Naive thymus-derived CD4-positive, alpha-beta T cell (primary cell): ENCODE measurements at regions of chr9 and their contacts with region 1.

Region 1: DNA sequence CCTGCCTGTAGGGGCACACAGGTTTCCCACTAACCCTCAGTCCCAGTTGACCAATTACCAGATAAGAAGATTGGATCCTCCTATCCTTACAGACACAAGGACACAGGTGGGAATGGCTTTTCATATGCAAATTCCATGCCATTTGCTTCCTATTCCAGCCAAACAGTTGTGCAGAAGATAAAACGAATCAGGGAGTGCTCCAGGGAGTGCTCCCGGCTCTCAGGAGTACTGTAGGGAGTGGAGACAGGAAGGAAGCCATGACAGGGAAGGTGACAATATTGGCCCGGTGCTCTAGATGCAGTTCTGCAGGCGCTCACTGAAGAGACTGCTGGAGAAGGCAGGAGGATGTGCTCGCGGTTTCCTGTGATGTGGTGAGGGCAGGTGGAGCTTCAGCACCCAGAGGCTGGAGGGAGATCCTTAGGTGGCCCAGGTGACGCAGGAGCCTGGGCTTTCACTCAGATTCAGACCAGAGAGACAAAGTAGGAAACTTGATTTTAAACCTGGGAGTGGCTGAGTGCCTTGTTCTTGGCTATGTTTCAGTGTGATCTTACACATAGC is 260.0 kb downstream of the AUH start:
- DNase-seq: peak; percentile 31 to 91 (median 87)
- ATAC-seq: peak; percentile 90
- H3K4me3 ChIP-seq: no peak overlapping the region
- H3K4me3 Mint-ChIP-seq: peak overlapping the region in 9 of 10 donors; percentile 44 to 82 (median 66)
- H3K27ac ChIP-seq: no peak overlapping the region
- H3K27ac Mint-ChIP-seq: peak overlapping the region in 7 of 9 donors; percentile 43 to 85 (median 78)
- H3K4me1 ChIP-seq: peaks cover 32 to 34% of the 10 kb centered on the region in 2 donors
- H3K4me1 Mint-ChIP-seq: peaks cover 27 to 61% (median 36%) of the 10 kb centered on the region in 7 donors
- H3K27me3 ChIP-seq: no peaks in the 10 kb centered on the region
- H3K27me3 Mint-ChIP-seq: peaks cover 0 to 25% (median 2%) of the 10 kb centered on the region in 5 donors

Region 2: GRCh38 chr9:90420768-90421513 is 680.7 kb before region 1 on chr9:
- CTCF ChIA-PET with region 1: no interaction called
- POLR2A ChIA-PET with region 1: no interaction called
- intact Hi-C with region 1: no loop called
- DNase-seq: no peak
- ATAC-seq: no peak
- H3K4me3 ChIP-seq: no peak overlapping the region
- H3K4me3 Mint-ChIP-seq: no peak overlapping the region
- H3K27ac ChIP-seq: no peak overlapping the region
- H3K27ac Mint-ChIP-seq: no peak overlapping the region
- H3K4me1 ChIP-seq: no peaks in the 10 kb centered on the region
- H3K4me1 Mint-ChIP-seq: peaks cover 0 to 4% (median 0%) of the 10 kb centered on the region in 7 donors
- H3K27me3 ChIP-seq: no peaks in the 10 kb centered on the region
- H3K27me3 Mint-ChIP-seq: peaks cover 4 to 15% (median 6%) of the 10 kb centered on the region in 5 donors

Region 3: GRCh38 chr9:91036826-91037510 is 64.7 kb before region 1 on chr9:
- CTCF ChIA-PET with region 1: no interaction called
- POLR2A ChIA-PET with region 1: no interaction called
- intact Hi-C with region 1: loop called (anchors 1 to 10 kb)
- DNase-seq: peak; percentile 31 to 69 (median 54)
- ATAC-seq: peak; percentile 88
- H3K4me3 ChIP-seq: no peak overlapping the region
- H3K4me3 Mint-ChIP-seq: peak overlapping the region in 9 of 10 donors; percentile 13 to 73 (median 37)
- H3K27ac ChIP-seq: no peak overlapping the region
- H3K27ac Mint-ChIP-seq: peak overlapping the region in 5 of 9 donors; percentile 13 to 38 (median 26)
- H3K4me1 ChIP-seq: peaks cover 8 to 11% of the 10 kb centered on the region in 2 donors
- H3K4me1 Mint-ChIP-seq: peaks cover 10 to 65% (median 11%) of the 10 kb centered on the region in 7 donors
- H3K27me3 ChIP-seq: no peaks in the 10 kb centered on the region
- H3K27me3 Mint-ChIP-seq: peaks cover 0 to 34% (median 14%) of the 10 kb centered on the region in 5 donors

Region 4: GRCh38 chr9:91071185-91071990 is 30.3 kb before region 1 on chr9:
- CTCF ChIA-PET with region 1: no interaction called
- POLR2A ChIA-PET with region 1: no interaction called
- intact Hi-C with region 1: loop called in 1 of 2 experiments (anchors 2 kb)
- DNase-seq: peak in 1 of 9 donors; percentile 69
- ATAC-seq: peak; percentile 34
- H3K4me3 ChIP-seq: no peak overlapping the region
- H3K4me3 Mint-ChIP-seq: peak overlapping the region in 1 of 10 donors; percentile 51
- H3K27ac ChIP-seq: no peak overlapping the region
- H3K27ac Mint-ChIP-seq: peak overlapping the region in 1 of 9 donors; percentile 76
- H3K4me1 ChIP-seq: no peaks in the 10 kb centered on the region
- H3K4me1 Mint-ChIP-seq: peaks cover 0 to 18% (median 0%) of the 10 kb centered on the region in 7 donors
- H3K27me3 ChIP-seq: no peaks in the 10 kb centered on the region
- H3K27me3 Mint-ChIP-seq: peaks cover 0 to 4% (median 0%) of the 10 kb centered on the region in 5 donors

Region 5: GRCh38 chr9:91150998-91151717 is 49.5 kb after region 1 on chr9:
- CTCF ChIA-PET with region 1: interaction called, 3 read pairs
- POLR2A ChIA-PET with region 1: no interaction called
- intact Hi-C with region 1: loop called in 1 of 2 experiments (anchors 1 kb)
- DNase-seq: peak in 8 of 9 donors; percentile 44 to 82 (median 71)
- ATAC-seq: peak; percentile 88
- H3K4me3 ChIP-seq: peak overlapping the region; percentile 17
- H3K4me3 Mint-ChIP-seq: peak overlapping the region; percentile 3 to 68 (median 50)
- H3K27ac ChIP-seq: no peak overlapping the region
- H3K27ac Mint-ChIP-seq: peak overlapping the region in 6 of 9 donors; percentile 44 to 93 (median 72)
- H3K4me1 ChIP-seq: peaks cover 17 to 24% of the 10 kb centered on the region in 2 donors
- H3K4me1 Mint-ChIP-seq: peaks cover 25 to 89% (median 35%) of the 10 kb centered on the region in 7 donors
- H3K27me3 ChIP-seq: no peaks in the 10 kb centered on the region
- H3K27me3 Mint-ChIP-seq: no peaks in the 10 kb centered on the region

Region 6: GRCh38 chr9:91207729-91208418 is 106.2 kb after region 1 on chr9:
- CTCF ChIA-PET with region 1: no interaction called
- POLR2A ChIA-PET with region 1: interaction called, 3 read pairs
- intact Hi-C with region 1: loop called in 1 of 2 experiments (anchors 2 kb)
- DNase-seq: peak in 5 of 9 donors; percentile 13 to 24 (median 21)
- ATAC-seq: peak; percentile 74
- H3K4me3 ChIP-seq: peak overlapping the region; percentile 4
- H3K4me3 Mint-ChIP-seq: peak overlapping the region; percentile 49 to 89 (median 80)
- H3K27ac ChIP-seq: peak overlapping the region; percentile 31
- H3K27ac Mint-ChIP-seq: peak overlapping the region; percentile 52 to 91 (median 83)
- H3K4me1 ChIP-seq: peaks cover 17 to 18% of the 10 kb centered on the region in 2 donors
- H3K4me1 Mint-ChIP-seq: peaks cover 13 to 61% (median 37%) of the 10 kb centered on the region in 7 donors
- H3K27me3 ChIP-seq: no peaks in the 10 kb centered on the region
- H3K27me3 Mint-ChIP-seq: no peaks in the 10 kb centered on the region

Region 7: GRCh38 chr9:91361291-91362050 is 259.8 kb after region 1 on chr9 and contains the start of gene AUH:
- CTCF ChIA-PET with region 1: no interaction called
- POLR2A ChIA-PET with region 1: no interaction called
- intact Hi-C with region 1: loop called in 1 of 2 experiments (anchors 1 kb)
- DNase-seq: peak; percentile 77 to 94 (median 87)
- ATAC-seq: peak; percentile 98
- H3K4me3 ChIP-seq: peak within 1 kb of the TSS; percentile 82
- H3K4me3 Mint-ChIP-seq: peak within 1 kb of the TSS; percentile 89 to 99 (median 98)
- H3K27ac ChIP-seq: peak within 1 kb of the TSS; percentile 82
- H3K27ac Mint-ChIP-seq: peak within 1 kb of the TSS; percentile 93 to 98 (median 96)
- H3K4me1 ChIP-seq: peaks cover 9 to 18% of the 10 kb centered on the region in 2 donors
- H3K4me1 Mint-ChIP-seq: peaks cover 38 to 59% (median 54%) of the 10 kb centered on the region in 7 donors
- H3K27me3 ChIP-seq: no peaks in the 10 kb centered on the region
- H3K27me3 Mint-ChIP-seq: no peaks in the 10 kb centered on the region
- total RNA-seq, gene AUH: 17.2 to 30.1 (median 25.9) TPM